Dendritic cell treated with granulocyte-macrophage colony-stimulating factor and Interleukin-4, amounts not matched to agents 40 ng/mL and 50 ng/mL, for 4 days (primary cell): ENCODE measurements at regions of chr1 and their contacts with region 1.

Region 1: DNA sequence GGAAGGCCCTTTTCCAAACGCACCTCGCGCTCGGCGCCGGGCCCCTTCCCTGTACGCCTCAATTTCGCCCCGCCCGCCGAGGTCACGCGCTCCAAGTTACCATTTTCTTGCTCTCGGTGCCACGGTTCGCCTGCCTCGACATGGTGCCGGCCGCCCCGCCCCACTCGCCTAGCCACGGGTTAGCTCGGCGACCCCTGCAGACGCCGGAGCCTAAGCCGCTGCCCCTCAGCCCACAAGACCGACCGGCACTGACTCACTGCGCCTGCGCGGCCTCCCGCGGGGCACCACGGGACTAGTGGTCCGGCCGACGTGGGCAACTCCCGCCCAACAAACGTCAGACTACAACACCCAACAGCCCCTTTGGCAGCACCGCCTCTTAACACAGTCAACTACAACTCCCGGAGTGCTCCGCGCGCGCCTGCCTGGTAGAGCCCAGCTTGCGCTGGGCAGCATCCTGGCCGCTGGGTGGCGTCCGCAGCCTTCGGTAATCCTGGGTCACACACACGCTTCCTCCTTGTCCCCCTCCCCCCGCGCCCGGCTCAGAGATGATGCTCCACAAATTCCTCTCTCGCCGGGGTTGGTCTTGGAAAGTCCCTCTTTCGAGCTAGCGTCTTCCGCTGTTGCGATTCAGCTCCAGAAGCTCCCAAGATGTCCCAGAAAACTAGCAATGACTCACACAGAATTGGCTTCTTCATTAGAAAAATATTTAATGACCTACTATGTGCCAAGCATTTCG is at the start of gene TRAPPC3:
- H3K4me3 Mint-ChIP-seq: peak within 1 kb of the TSS; percentile 95
- H3K27ac Mint-ChIP-seq: peak within 1 kb of the TSS; percentile 97
- H3K4me1 Mint-ChIP-seq: peaks cover 64% of the 10 kb centered on the region
- H3K27me3 Mint-ChIP-seq: no peaks in the 10 kb centered on the region

Region 2: DNA sequence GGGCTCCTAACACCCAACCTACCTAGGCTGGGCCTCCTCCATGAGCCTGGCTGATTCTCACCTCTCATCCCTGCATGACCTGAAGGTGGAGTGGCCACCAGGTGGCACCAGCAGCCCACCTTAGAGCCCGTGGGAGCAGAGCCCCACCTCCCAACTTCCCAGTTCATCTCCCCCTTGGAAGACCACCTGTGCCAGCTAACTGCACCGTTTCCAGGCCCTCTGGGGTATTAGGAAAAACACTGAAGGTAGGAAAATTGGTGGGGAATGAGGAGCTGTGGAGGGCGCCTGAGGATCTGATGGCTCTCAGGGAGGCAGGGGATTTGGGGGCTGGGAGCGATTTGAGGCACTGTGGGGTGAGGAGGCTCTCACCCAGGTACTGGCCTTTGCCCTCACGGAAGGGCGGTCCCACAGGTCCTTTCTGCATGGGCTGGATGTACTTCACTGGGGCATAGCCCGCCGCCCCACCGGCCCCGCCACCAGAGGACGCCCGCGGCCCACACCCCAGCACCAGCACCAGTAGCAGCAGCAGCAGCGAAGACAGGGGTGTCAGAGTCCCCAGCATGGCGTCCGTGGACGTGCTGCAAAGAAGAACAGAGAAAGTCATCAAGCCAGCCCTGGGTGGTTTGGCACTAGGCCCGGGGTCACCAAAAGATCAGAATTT is 49.6 kb before region 1 on chr1:
- intact Hi-C with region 1: loop called (anchors 1 kb)
- H3K4me3 Mint-ChIP-seq: no peak overlapping the region
- H3K27ac Mint-ChIP-seq: no peak overlapping the region
- H3K4me1 Mint-ChIP-seq: peaks cover 37% of the 10 kb centered on the region
- H3K27me3 Mint-ChIP-seq: no peaks in the 10 kb centered on the region

Region 3: DNA sequence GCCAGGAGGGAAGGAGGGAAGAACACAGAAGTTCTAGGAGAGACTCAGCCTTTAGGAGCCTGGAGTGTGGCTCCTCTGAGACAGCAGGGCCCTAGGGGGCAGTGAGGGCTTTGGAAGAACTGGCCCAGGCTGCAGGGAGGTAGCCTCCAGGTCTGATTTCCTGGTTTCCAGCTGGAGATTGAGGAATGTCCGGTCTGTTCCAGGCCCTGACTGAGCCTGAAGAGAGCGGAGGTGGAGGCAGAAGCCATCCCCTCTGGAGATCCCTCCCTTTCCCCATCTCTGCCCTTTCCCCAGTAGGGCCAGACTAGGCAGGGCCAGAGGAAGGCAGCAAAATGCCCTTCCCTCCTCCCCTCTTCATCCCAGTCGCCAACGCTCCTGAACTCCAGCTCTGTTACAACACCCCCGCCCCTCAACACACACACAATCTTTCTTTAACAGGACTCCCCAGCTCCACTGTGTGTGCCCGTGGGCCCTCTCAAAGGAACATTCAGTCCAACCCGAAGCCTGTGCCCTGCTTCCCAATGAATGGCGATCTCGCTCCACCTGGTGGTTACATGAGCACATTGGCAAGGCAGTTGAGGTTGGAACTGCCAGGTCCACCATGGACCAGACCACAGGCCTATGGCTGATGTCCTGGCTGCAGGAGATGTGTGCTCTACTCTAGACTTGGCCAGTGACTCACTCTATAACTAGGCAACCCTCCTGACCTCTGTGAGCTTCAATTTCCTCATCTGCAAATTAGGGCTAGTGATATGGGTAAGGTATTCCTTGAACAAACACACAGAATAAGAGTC is 38.6 kb after region 1 on chr1:
- intact Hi-C with region 1: loop called (anchors 1 kb)
- H3K4me3 Mint-ChIP-seq: no peak overlapping the region
- H3K27ac Mint-ChIP-seq: peak overlapping the region; percentile 83
- H3K4me1 Mint-ChIP-seq: peaks cover 17% of the 10 kb centered on the region
- H3K27me3 Mint-ChIP-seq: no peaks in the 10 kb centered on the region

Region 4: GRCh38 chr1:36203554-36204346 is 54.3 kb after region 1 on chr1:
- intact Hi-C with region 1: no loop called
- H3K4me3 Mint-ChIP-seq: no peak overlapping the region
- H3K27ac Mint-ChIP-seq: peak overlapping the region; percentile 89
- H3K4me1 Mint-ChIP-seq: peaks cover 17% of the 10 kb centered on the region
- H3K27me3 Mint-ChIP-seq: no peaks in the 10 kb centered on the region

Region 5: DNA sequence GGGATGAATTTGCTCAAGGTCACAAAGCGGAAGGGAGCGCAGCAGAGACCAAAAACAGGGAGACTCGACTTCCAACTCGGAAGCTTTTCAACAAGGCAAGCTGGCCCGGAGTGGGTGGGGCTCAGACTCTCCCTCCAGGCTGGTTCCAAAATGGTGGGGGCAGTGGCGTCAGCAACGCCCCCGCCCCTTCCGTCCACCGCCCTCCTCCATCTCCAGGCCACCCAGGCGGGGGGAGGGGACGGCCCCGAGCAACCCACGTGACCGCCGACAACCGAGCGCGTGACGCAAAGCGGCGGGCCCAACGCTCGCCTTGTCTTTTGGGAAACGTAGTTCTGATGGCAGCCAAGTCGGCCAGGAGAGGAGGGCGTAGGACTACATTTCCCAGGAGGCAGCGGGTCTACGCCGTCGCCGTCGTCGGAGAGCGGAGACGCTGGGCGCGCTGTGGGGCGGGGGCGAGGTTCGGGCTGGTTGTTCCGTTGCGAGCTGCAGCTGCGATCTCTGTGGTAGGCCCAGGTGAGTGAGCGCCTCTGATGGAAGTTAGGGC is 74.7 kb after region 1 on chr1 and contains the start of gene THRAP3:
- intact Hi-C with region 1: loop called (anchors 1 kb)
- H3K4me3 Mint-ChIP-seq: peak within 1 kb of the TSS; percentile 98
- H3K27ac Mint-ChIP-seq: peak within 1 kb of the TSS; percentile 99
- H3K4me1 Mint-ChIP-seq: peaks cover 34% of the 10 kb centered on the region
- H3K27me3 Mint-ChIP-seq: no peaks in the 10 kb centered on the region

Region 6: GRCh38 chr1:36285448-36286101 is 136.2 kb after region 1 on chr1:
- intact Hi-C with region 1: loop called (anchors 5 kb)
- H3K4me3 Mint-ChIP-seq: no peak overlapping the region
- H3K27ac Mint-ChIP-seq: no peak overlapping the region
- H3K4me1 Mint-ChIP-seq: no peaks in the 10 kb centered on the region
- H3K27me3 Mint-ChIP-seq: no peaks in the 10 kb centered on the region

Region 7: GRCh38 chr1:36300526-36300925 is 151.1 kb after region 1 on chr1:
- intact Hi-C with region 1: loop called (anchors 5 kb)
- H3K4me3 Mint-ChIP-seq: no peak overlapping the region
- H3K27ac Mint-ChIP-seq: peak overlapping the region; percentile 42
- H3K4me1 Mint-ChIP-seq: peaks cover 56% of the 10 kb centered on the region
- H3K27me3 Mint-ChIP-seq: no peaks in the 10 kb centered on the region